ENCODE measurements at regions of chr1 and their contacts with region 1.

Region 1: GRCh38 chr1:200226268-200226968 is 183.4 kb downstream of the ZNF281 start:
- DNase-seq: no peak
- ATAC-seq: peak; percentile 55
- H3K4me3 ChIP-seq: no peak overlapping the region
- H3K27ac ChIP-seq: no peak overlapping the region
- H3K4me1 ChIP-seq: peaks cover 6% of the 10 kb centered on the region; the same call in 1 of the 2 replicates
- H3K27me3 ChIP-seq: peaks cover 0 to 3% of the 10 kb centered on the region in 2 experiments; a peak in 1 of 4 replicates
- CTCF ChIP-seq: no peak
- EP300 ChIP-seq: no peak
- POLR2A ChIP-seq: no peak
- RAD21 ChIP-seq: no peak

Region 2: DNA sequence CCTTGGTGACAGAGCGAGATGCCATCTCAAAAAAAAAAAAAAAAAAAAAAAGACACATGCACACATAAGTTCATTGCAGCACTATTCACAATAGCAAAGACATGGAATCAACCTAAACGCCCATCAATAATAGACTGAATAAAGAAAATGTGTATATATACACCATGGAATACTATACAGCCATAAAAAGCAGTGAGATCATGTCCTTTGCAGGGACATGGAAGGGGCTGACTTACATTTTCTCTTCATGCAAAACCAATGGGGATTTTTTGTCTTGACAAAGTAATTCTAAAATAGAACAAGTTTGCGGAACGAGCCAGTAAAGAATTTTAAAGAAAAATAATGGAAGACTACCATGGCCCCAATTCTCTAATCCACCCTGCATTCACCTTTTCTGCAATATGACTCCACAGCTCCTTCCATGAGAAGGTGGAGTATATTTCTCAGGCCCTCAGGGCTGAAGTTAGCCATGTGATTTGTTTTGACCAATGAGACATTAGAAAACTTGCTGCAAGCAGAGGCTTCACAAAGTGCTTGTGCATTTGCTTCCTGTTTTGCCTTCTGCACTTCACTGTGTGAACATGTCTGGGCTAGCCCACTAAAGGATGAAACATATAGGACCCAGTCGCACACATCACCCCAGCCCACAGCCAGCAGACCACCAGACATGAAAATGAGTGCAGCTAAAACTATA is 277.7 kb before region 1 on chr1:
- CTCF ChIA-PET with region 1: no interaction called
- POLR2A ChIA-PET with region 1: no interaction called
- RAD21 ChIA-PET with region 1: no interaction called
- SMC1A ChIA-PET with region 1: no interaction called
- in situ Hi-C with region 1: no loop called
- intact Hi-C with region 1: no loop called
- DNase-seq: no peak
- ATAC-seq: no peak
- H3K4me3 ChIP-seq: no peak overlapping the region
- H3K27ac ChIP-seq: no peak overlapping the region
- H3K4me1 ChIP-seq: no peaks in the 10 kb centered on the region
- H3K27me3 ChIP-seq: peaks cover 0 to 5% of the 10 kb centered on the region in 2 experiments; a peak in 2 of 4 replicates
- CTCF ChIP-seq: no peak
- EP300 ChIP-seq: no peak
- POLR2A ChIP-seq: no peak
- RAD21 ChIP-seq: no peak

Region 3: DNA sequence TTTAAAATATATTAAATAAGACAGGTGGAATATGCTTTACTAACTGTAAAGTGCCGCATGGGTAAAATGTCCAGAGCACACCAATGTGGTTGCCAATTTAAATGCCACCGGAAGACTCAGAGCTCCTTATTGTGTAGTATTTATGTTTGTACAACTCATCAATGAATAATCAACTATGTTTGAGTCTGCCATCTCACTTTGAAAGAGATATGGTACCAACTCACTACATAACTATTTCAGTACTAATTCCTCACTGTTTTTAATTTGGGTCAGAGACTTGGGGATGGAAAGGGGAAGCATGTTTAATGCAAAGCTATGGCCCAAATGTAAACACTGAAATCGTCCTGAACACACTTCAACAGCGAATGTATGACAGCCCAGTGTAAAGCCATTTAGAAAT is 54.1 kb before region 1 on chr1:
- CTCF ChIA-PET with region 1: no interaction called
- POLR2A ChIA-PET with region 1: no interaction called
- RAD21 ChIA-PET with region 1: no interaction called
- SMC1A ChIA-PET with region 1: no interaction called
- in situ Hi-C with region 1: no loop called
- intact Hi-C with region 1: no loop called
- DNase-seq: no peak
- ATAC-seq: no peak
- H3K4me3 ChIP-seq: no peak overlapping the region
- H3K27ac ChIP-seq: no peak overlapping the region
- H3K4me1 ChIP-seq: no peaks in the 10 kb centered on the region
- H3K27me3 ChIP-seq: no peaks in the 10 kb centered on the region
- CTCF ChIP-seq: no peak
- EP300 ChIP-seq: no peak
- POLR2A ChIP-seq: no peak
- RAD21 ChIP-seq: no peak

Region 4: DNA sequence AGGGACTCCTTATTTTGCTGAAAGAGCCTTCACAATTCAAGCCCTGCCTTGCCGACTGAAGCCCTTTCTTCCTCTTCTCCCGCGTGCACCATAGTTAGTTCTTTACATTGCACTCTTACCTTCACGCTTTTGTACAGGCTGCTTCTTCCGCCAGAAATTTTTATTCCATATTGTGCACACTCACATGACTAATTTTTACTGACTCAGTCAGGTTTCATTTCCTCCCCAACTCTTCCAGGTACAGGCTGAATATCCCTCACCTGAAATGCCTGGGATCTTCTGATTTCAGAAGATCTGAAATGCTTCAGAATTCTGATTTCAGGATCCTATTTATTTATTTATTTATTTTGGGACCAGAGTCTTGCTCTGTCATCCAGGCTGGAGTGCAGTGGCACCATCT is 10.6 kb after region 1 on chr1:
- CTCF ChIA-PET with region 1: interaction called, 3 read pairs
- POLR2A ChIA-PET with region 1: no interaction called
- RAD21 ChIA-PET with region 1: interaction called, 3 read pairs
- SMC1A ChIA-PET with region 1: interaction called, 10 read pairs
- in situ Hi-C with region 1: no loop called
- intact Hi-C with region 1: no loop called
- DNase-seq: no peak
- ATAC-seq: no peak
- H3K4me3 ChIP-seq: no peak overlapping the region
- H3K27ac ChIP-seq: no peak overlapping the region
- H3K4me1 ChIP-seq: no peaks in the 10 kb centered on the region
- H3K27me3 ChIP-seq: peaks cover 0 to under 1% of the 10 kb centered on the region in 2 experiments; a peak in 3 of 4 replicates
- CTCF ChIP-seq: no peak
- EP300 ChIP-seq: no peak
- POLR2A ChIP-seq: no peak
- RAD21 ChIP-seq: no peak